ENCODE measurements at regions of chr10 and their contacts with region 1.

Region 1: DNA sequence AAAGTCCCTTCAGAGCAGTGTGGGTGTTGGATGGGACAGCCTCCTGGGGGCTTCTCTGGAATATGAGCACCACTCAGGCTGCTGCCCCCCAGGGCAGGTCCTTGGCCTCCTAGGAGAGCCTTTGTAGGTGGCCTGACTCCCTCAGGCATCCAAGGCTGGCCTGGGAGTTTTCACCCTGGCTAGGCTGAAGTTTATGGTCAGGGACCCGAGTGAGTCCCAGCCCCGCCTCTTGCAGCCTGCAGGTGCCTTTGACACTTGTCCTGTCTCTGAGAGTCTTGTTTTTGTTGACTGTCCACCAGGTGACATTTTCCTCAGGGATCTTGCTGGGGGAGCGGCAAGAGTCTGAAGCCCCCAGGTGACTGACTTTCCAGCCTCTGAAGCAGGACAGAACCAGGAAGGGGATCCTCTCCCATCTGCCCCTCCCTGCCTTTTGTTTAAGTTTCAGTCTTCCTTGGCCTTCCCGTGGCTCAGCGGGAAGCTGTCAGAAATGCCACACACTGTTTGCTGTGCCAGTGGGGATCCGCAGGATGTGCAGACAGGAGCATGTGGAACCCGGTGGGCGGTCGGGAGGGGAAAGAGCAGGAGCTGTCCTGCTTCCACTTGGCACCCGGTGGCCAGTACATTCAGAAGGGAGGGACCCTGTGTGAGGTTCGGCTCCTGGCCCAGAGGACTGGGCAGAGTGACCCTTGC is 59.5 kb downstream of the LRRC18 start:
- DNase-seq: no peak
- H3K4me3 ChIP-seq: no peak overlapping the region
- H3K27ac ChIP-seq: no peak overlapping the region
- H3K4me1 ChIP-seq: no peaks in the 10 kb centered on the region
- H3K27me3 ChIP-seq: no peaks in the 10 kb centered on the region
- CTCF ChIP-seq: no peak
- POLR2A ChIP-seq: no peak

Region 2: DNA sequence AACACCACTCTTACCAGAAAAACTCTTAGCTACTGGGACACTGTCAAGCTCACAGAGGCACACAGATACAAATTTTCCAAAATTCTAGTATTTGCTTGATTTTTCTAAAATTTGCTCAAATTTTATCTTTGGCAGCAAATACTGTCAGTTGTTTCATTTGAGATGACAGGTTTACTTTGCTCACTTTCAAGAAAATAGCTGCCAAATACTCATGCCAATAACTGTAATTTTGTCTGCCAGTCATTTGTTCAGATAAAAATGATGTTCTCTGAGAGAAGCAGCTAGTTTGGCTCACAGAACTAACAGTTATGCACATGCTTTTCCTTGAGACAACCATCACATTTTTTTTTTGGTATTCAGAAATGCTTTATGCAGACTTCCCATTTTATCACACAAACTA is 23.3 kb before region 1 on chr10:
- intact Hi-C with region 1: no loop called
- DNase-seq: no peak
- H3K4me3 ChIP-seq: no peak overlapping the region
- H3K27ac ChIP-seq: no peak overlapping the region
- H3K4me1 ChIP-seq: no peaks in the 10 kb centered on the region
- H3K27me3 ChIP-seq: no peaks in the 10 kb centered on the region
- CTCF ChIP-seq: no peak
- POLR2A ChIP-seq: no peak

Region 3: DNA sequence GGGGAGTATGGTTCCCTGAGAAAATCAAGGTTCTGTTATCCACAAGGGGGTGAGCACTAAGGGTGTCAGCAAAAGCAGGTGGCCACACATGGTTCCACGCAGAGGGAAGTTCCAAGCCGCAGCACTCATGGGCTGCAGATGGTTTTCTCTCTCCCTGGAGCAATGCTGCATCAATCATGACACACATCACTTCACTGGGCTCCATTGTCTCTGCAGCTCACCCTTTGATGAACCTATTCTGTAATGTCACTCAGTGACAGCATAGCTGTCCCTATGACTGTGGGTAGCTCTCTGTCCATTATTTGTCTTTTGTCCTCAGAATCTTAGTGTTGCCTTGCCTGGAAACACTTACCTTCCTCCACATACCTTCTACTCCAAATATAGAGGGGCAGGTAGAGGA is 24.7 kb after region 1 on chr10:
- intact Hi-C with region 1: loop called (anchors 1 kb)
- DNase-seq: no peak
- H3K4me3 ChIP-seq: no peak overlapping the region
- H3K27ac ChIP-seq: no peak overlapping the region
- H3K4me1 ChIP-seq: no peaks in the 10 kb centered on the region
- H3K27me3 ChIP-seq: no peaks in the 10 kb centered on the region
- CTCF ChIP-seq: no peak
- POLR2A ChIP-seq: no peak

Measured in breast epithelium (tissue), 4 donors.